ENCODE measurements at regions of chr6 and their contacts with region 1.

Region 1: DNA sequence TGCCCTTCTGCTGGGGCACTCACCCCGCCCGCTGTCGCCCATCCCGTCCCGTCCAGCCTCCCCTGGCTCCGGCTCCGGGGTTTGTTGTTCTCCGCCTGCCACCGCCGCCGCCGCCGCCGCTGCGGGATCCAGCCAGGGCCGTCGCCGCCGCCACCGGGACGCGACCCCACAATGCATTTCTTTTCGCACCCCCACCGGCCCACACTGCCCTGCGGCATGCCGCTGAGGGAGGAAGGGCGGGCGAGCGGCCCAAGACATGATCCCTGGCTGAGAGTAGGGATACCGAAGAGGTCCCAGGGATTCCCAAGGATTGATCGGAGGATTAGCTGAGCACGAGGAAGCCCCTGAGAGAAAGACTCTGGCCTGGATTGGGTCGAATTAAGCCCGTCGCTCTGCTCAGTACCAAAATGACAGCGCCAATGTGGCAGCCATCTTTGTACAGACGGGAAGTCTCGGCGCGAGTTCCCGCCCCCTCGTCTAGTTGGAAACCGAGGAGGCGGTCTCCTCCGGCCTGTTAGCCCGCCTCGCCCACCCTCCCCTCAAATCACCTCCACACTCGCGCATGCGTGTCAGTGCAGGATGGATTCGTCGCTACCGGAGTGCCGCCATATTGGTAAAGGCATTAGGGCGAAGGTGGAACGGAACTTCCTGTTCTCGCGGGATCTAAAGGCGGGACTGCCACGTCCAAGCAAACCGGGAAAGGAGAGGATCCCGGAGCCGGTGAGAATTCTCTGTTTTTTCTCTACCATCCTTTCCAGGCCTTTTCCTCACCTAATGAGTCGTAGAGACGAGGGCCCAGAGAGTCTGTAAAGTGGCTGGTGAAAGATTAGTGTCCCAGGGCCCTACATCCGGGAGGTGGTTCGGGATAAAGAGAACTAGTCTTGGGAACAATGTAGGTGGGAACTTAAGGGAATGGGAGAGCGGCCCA is at the starts of genes RXRB and SLC39A7:
- DNase-seq: peak; percentile 100
- H3K4me3 Mint-ChIP-seq: peak within 1 kb of the TSS; percentile 94
- H3K27ac Mint-ChIP-seq: peak within 1 kb of the TSS; percentile 96
- H3K4me1 Mint-ChIP-seq: peaks cover 60% of the 10 kb centered on the region
- H3K27me3 Mint-ChIP-seq: no peaks in the 10 kb centered on the region
- total RNA-seq, gene RXRB: 40.9 to 41.4 TPM
- total RNA-seq, gene SLC39A7: 42.0 to 45.7 TPM

Region 2: GRCh38 chr6:32843979-32844838 is 356.3 kb before region 1 on chr6 and contains the start of gene PSMB8:
- CTCF ChIA-PET with region 1: no interaction called
- POLR2A ChIA-PET with region 1: no interaction called
- intact Hi-C with region 1: loop called (anchors 5 kb)
- DNase-seq: peak; percentile 99
- H3K4me3 Mint-ChIP-seq: peak within 1 kb of the TSS; percentile 97
- H3K27ac Mint-ChIP-seq: peak within 1 kb of the TSS; percentile 100
- H3K4me1 Mint-ChIP-seq: peaks cover 63% of the 10 kb centered on the region
- H3K27me3 Mint-ChIP-seq: no peaks in the 10 kb centered on the region
- total RNA-seq, gene PSMB8: 350 to 370 TPM

Region 3: GRCh38 chr6:33147807-33148666 is 52.4 kb before region 1 on chr6:
- CTCF ChIA-PET with region 1: interaction called, 10 read pairs
- POLR2A ChIA-PET with region 1: no interaction called
- intact Hi-C with region 1: no loop called
- DNase-seq: no peak
- H3K4me3 Mint-ChIP-seq: no peak overlapping the region
- H3K27ac Mint-ChIP-seq: no peak overlapping the region
- H3K4me1 Mint-ChIP-seq: no peaks in the 10 kb centered on the region
- H3K27me3 Mint-ChIP-seq: peaks cover 24% of the 10 kb centered on the region

Region 4: GRCh38 chr6:33241968-33242367 is 41.5 kb after region 1 on chr6:
- CTCF ChIA-PET with region 1: interaction called, 16 read pairs
- POLR2A ChIA-PET with region 1: interaction called, 6 read pairs
- intact Hi-C with region 1: loop called (anchors 1 kb)
- DNase-seq: no peak
- H3K4me3 Mint-ChIP-seq: no peak overlapping the region
- H3K27ac Mint-ChIP-seq: peak overlapping the region; percentile 1
- H3K4me1 Mint-ChIP-seq: peaks cover 9% of the 10 kb centered on the region
- H3K27me3 Mint-ChIP-seq: peaks cover 7% of the 10 kb centered on the region

Region 5: DNA sequence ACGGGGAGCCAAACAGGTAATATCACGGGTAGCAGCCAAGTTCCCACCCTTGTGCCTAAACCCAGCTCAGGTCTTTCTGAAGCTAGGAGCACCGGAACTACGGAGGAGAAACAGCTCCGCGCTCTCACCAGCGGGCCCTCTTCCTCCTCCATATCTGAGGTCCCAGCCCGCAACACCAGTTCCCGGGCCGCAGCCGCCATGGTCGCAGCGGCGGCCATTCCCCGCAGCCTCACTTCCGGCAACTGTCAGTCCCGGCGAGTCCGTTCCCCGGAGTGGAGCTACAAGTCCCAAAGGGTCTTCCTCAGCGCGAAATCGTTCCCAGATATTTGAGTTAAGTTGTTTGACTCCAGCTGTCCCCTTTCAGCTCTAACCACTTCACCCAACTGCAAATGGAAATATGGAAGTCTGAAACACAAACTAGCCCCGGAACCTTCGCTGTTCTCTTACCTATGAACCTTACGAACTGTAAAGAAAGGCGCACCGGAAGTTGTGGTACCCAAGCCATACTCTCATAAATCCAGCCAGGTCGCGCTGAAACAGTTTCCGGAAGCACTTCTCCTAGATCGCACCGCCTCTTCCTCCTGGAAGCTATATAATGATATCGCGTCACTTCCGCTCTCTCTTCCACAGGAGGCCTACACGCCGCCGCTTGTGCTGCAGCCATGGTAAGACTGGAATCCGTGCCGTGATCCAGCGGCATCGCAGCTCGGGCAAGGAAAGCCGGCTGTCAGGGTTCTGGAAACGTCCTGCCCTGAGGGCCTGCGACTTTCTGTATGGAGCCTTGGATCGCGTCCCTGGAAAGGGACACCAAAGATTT is 71.2 kb after region 1 on chr6 and contains the starts of genes RPS18 and VPS52:
- CTCF ChIA-PET with region 1: interaction called, 6 read pairs
- POLR2A ChIA-PET with region 1: interaction called, 4 read pairs
- intact Hi-C with region 1: loop called (anchors 1 kb)
- DNase-seq: peak; percentile 94
- H3K4me3 Mint-ChIP-seq: peak within 1 kb of the TSS; percentile 94
- H3K27ac Mint-ChIP-seq: peak within 1 kb of the TSS; percentile 98
- H3K4me1 Mint-ChIP-seq: peaks cover 42% of the 10 kb centered on the region
- H3K27me3 Mint-ChIP-seq: no peaks in the 10 kb centered on the region
- total RNA-seq, gene RPS18: 4,372 to 4,391 TPM
- total RNA-seq, gene VPS52: 32.7 to 33.7 TPM

Region 6: GRCh38 chr6:33317669-33318425 is 117.4 kb after region 1 on chr6 and contains the start of gene ZBTB22:
- CTCF ChIA-PET with region 1: no interaction called
- POLR2A ChIA-PET with region 1: no interaction called
- intact Hi-C with region 1: loop called (anchors 2 kb)
- DNase-seq: peak; percentile 97
- H3K4me3 Mint-ChIP-seq: peak within 1 kb of the TSS; percentile 94
- H3K27ac Mint-ChIP-seq: peak within 1 kb of the TSS; percentile 95
- H3K4me1 Mint-ChIP-seq: peaks cover 71% of the 10 kb centered on the region
- H3K27me3 Mint-ChIP-seq: no peaks in the 10 kb centered on the region
- total RNA-seq, gene ZBTB22: 11.0 to 12.1 TPM

Region 7: DNA sequence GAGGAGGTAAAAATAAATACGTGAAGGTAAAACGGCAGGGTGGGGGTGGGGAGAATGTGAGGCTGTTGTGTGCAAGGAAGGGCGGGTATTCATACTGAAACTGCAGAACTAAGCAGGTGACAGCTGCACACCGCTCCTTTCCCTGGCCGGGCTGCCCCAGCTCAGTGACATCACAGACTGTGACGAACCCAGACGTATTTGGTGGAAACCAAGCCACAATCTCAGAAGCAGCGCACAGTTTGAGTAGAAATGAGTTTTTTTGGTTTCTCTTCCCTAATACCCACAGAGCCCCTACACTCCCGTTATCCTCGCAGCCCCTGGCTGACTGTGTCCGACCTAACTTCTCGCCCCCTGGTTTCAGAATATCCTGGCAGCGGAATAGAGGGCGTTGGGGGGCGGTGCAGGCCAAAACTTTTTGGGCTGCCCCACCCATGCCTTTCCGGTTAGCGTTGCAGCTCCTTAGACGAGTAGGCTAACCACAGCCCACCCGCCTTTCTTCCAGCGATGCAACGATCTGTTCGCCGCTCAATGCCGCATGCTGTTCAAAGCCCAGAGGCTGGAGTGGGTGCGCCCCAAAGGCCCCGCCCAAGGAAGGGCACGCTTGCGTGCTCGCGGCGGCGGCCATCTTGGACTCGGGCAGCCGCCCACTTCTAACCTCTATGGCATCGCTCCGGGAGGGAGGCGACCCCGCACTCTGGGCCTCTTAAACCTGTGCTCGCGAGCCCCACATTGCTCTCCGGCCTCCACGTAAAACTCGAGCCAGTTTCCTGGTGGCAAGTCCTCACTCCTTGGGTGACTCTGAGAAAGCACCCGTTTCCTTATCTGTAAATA is 370.5 kb after region 1 on chr6:
- CTCF ChIA-PET with region 1: no interaction called
- POLR2A ChIA-PET with region 1: no interaction called
- intact Hi-C with region 1: loop called (anchors 2 kb)
- DNase-seq: peak; percentile 97
- H3K4me3 Mint-ChIP-seq: peak overlapping the region; percentile 82
- H3K27ac Mint-ChIP-seq: peak overlapping the region; percentile 99
- H3K4me1 Mint-ChIP-seq: peaks cover 41% of the 10 kb centered on the region
- H3K27me3 Mint-ChIP-seq: no peaks in the 10 kb centered on the region

Measured in activated CD4-positive, alpha-beta memory T cell treated with anti-CD3 and anti-CD28 coated beads for 36 hours (primary cell).